H1 (cell line): ENCODE measurements at regions of chrX and their contacts with region 1.

Region 1: GRCh38 chrX:74291964-74292807 is 11.8 kb upstream of the ZCCHC13 start:
- DNase-seq: peak; percentile 71 to 74
- H3K4me3 ChIP-seq: peak overlapping the region; percentile 78 to 95 (median 86)
- H3K27ac ChIP-seq: peak overlapping the region; percentile 94
- H3K4me1 ChIP-seq: peaks cover 0 to 9% (median 3%) of the 10 kb centered on the region in 4 experiments; a peak in 3 of 7 replicates
- H3K27me3 ChIP-seq: no peaks in the 10 kb centered on the region
- CTCF ChIP-seq: peak in 2 of 3 experiments; percentile 28 to 37; a peak in 2 of 4 replicates
- EP300 ChIP-seq: no peak
- POLR2A ChIP-seq: peak in 1 of 2 experiments; percentile 54; a peak in 2 of 3 replicates
- RAD21 ChIP-seq: peak in 1 of 2 experiments; percentile 43; a peak in 2 of 4 replicates

Region 2: GRCh38 chrX:74187211-74187610 is 105.0 kb before region 1 on chrX:
- CTCF ChIA-PET with region 1: no interaction called
- POLR2A ChIA-PET with region 1: no interaction called
- DNase-seq: no peak
- H3K4me3 ChIP-seq: no peak overlapping the region
- H3K27ac ChIP-seq: no peak overlapping the region
- H3K4me1 ChIP-seq: no peaks in the 10 kb centered on the region
- H3K27me3 ChIP-seq: no peaks in the 10 kb centered on the region
- CTCF ChIP-seq: no peak
- EP300 ChIP-seq: no peak
- POLR2A ChIP-seq: no peak
- RAD21 ChIP-seq: no peak

Region 3: GRCh38 chrX:74262452-74263209 is 29.6 kb before region 1 on chrX:
- CTCF ChIA-PET with region 1: interaction called, 4 read pairs
- POLR2A ChIA-PET with region 1: interaction called, 16 read pairs
- DNase-seq: no peak
- H3K4me3 ChIP-seq: no peak overlapping the region
- H3K27ac ChIP-seq: no peak overlapping the region
- H3K4me1 ChIP-seq: peaks cover 3 to 13% (median 6%) of the 10 kb centered on the region in 4 experiments; a peak in 6 of 7 replicates
- H3K27me3 ChIP-seq: no peaks in the 10 kb centered on the region
- CTCF ChIP-seq: no peak
- EP300 ChIP-seq: no peak
- POLR2A ChIP-seq: no peak
- RAD21 ChIP-seq: no peak

Region 4: GRCh38 chrX:74280759-74281158 is 11.4 kb before region 1 on chrX:
- CTCF ChIA-PET with region 1: no interaction called
- POLR2A ChIA-PET with region 1: interaction called, 27 read pairs
- DNase-seq: no peak
- H3K4me3 ChIP-seq: no peak overlapping the region
- H3K27ac ChIP-seq: no peak overlapping the region
- H3K4me1 ChIP-seq: peaks cover 1 to 17% (median 9%) of the 10 kb centered on the region in 4 experiments; a peak in 4 of 7 replicates
- H3K27me3 ChIP-seq: no peaks in the 10 kb centered on the region
- CTCF ChIP-seq: no peak
- EP300 ChIP-seq: no peak
- POLR2A ChIP-seq: no peak
- RAD21 ChIP-seq: no peak

Region 5: DNA sequence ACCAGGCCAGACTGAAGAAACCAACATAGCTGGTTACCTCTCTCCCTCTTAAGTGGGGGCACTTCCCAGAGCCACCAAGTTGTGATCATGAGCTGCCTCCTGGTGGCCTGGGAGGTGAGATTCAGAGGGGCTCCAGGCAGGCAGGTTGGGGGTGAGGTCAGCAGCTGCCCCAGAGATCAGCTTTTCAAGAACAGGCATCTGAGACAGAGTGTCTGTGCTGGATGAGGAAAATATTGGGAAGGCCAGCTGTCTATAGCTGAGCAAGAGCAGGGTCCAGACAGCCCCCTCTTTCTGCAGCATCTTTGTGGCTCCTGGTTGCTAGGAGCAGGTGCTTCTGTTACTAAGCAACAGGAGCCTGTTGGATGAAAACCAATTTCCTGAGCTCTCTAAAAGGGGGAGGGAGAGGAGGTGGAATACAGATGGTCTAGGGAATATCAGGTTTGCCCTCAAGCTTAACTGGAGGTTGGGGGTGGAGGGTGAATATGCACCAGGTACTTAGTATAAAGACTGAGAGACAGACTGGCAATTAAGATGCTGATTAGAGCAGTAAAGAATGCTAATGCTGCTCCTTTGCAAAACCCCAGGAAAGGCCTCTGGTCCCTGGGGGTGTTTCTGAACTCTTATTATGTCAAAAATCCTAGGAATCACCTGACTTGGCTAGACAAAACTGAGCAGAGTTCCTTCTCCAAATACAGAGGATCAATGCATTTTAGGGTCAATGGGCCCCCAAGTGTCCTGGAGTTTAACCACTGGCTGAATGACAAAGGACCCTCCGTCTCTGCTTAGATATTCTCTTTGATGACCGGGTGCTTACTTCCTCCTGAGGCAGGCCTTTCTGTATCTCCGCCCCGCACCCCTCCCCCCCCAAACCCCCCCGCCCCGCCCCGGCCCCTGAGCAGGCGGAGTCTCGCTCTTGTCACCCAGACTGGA is 33.2 kb after region 1 on chrX:
- CTCF ChIA-PET with region 1: interaction called, 7 read pairs
- POLR2A ChIA-PET with region 1: interaction called, 25 read pairs
- DNase-seq: peak; percentile 57 to 71
- H3K4me3 ChIP-seq: 0 out of 8 replicates have a peak overlapping the region, but pooled peaks of 1 of the 4 experiments have one; percentile 26
- H3K27ac ChIP-seq: no peak overlapping the region; the same call in 1 of the 2 replicates
- H3K4me1 ChIP-seq: peaks cover 0 to 12% (median 8%) of the 10 kb centered on the region in 4 experiments; a peak in 4 of 7 replicates
- H3K27me3 ChIP-seq: no peaks in the 10 kb centered on the region
- CTCF ChIP-seq: peak; percentile 40 to 58 (median 57)
- EP300 ChIP-seq: no peak
- POLR2A ChIP-seq: no peak
- RAD21 ChIP-seq: peak; percentile 73 to 82